Panc1 (cell line): ENCODE measurements at regions of chr2 and their contacts with region 1.

Region 1: GRCh38 chr2:197113275-197113711 is 186.8 kb upstream of the PGAP1 start:
- DNase-seq: peak; percentile 33
- ATAC-seq: peak; percentile 65; the same call in 1 of the 2 replicates
- H3K4me3 ChIP-seq: no peak overlapping the region
- H3K27ac ChIP-seq: no peak overlapping the region
- H3K4me1 ChIP-seq: no peaks in the 10 kb centered on the region
- H3K27me3 ChIP-seq: no peaks in the 10 kb centered on the region
- CTCF ChIP-seq: peak; percentile 73

Region 2: DNA sequence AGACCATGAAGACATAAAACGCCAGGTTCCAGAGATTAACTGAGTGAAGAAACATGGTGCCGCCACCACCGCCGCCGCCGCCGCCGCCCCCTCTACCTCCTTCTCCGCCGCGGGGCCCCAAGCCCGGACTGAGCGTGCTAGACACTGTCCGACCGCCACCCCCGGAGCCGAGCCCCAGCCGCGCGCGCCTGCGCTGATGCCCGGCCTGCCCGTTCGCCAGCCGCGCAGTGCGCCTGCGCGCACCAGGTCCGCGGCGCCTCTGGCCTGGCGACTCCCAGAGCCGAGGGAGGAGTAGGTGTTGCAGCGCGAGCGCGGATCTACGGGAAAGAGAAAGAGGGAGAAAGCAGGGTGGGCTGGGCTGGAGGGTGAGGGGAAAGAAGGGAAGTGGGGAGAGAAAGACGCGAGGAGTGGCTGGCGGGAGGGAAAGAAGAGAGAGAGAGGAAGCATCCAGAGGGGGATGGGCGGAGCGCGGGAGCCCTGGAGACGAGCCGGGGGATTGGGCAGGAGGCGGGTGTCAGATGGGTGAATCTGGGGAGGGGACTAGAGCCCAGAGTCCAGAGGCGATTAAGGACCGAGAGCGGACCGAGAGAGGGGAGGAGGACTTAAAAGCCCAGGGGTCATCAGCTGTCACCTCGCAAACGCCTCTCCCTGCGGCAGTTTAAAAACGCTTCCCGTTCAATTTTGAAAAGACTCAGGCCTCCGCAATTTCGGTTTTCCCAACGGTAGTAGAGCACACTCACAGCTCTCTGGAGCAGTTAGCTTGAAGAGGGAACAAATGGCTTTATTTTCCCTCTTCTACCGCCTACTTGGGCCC is 186.5 kb before region 1 on chr2 and contains the start of gene PGAP1:
- CTCF ChIA-PET with region 1: no interaction called
- POLR2A ChIA-PET with region 1: interaction called, 15 read pairs
- in situ Hi-C with region 1: no loop called
- intact Hi-C with region 1: no loop called
- DNase-seq: peak; percentile 62
- ATAC-seq: peak; percentile 95
- H3K4me3 ChIP-seq: peak within 1 kb of the TSS; percentile 86 to 94
- H3K27ac ChIP-seq: peak within 1 kb of the TSS; percentile 97
- H3K4me1 ChIP-seq: peaks cover 15% of the 10 kb centered on the region
- H3K27me3 ChIP-seq: no peaks in the 10 kb centered on the region
- CTCF ChIP-seq: no peak
- total RNA-seq, gene PGAP1: 15.7 TPM

Region 3: DNA sequence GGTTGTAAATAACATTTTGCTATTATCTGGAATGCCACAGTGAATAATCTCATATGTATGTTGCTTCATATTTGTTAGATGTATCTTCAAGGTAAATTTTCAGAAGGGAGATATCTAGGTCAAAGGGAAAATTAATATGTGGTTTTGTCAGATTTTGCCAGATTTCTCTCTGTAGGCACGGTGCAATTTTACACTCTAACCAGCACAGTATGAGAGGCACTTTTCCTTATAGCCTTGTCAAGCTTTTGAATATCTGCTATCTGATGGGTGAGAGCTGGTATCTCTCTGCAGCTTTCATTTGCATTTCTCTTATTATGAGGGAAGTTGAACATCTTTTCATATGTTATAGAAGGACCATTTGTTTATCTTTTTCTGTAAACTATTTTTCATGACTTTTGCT is 11.1 kb before region 1 on chr2:
- CTCF ChIA-PET with region 1: no interaction called
- POLR2A ChIA-PET with region 1: no interaction called
- in situ Hi-C with region 1: no loop called
- intact Hi-C with region 1: no loop called
- DNase-seq: no peak
- ATAC-seq: no peak
- H3K4me3 ChIP-seq: no peak overlapping the region
- H3K27ac ChIP-seq: no peak overlapping the region
- H3K4me1 ChIP-seq: no peaks in the 10 kb centered on the region
- H3K27me3 ChIP-seq: no peaks in the 10 kb centered on the region
- CTCF ChIP-seq: no peak

Region 4: DNA sequence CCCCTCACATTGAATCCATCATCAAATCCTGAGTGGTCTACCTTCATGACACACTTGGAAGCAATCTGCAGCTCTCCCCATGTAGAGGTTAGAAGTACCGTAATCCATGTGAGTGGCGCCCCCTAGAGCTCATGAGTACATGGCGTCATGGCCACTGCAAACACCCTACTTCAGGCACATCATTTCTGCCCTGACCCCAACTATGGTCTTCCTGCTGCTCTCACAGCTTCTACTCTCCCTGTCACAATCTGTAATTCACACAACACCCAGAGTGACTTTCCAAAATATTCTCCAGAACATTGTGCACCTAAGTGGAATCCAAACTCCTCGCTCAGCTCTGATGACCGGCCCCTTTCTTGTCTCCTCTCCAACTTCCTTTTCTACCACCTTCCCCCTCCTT is 55.4 kb after region 1 on chr2:
- CTCF ChIA-PET with region 1: interaction called, 12 read pairs
- POLR2A ChIA-PET with region 1: no interaction called
- in situ Hi-C with region 1: no loop called
- intact Hi-C with region 1: no loop called
- DNase-seq: no peak
- ATAC-seq: peak; percentile 94
- H3K4me3 ChIP-seq: no peak overlapping the region
- H3K27ac ChIP-seq: no peak overlapping the region
- H3K4me1 ChIP-seq: no peaks in the 10 kb centered on the region
- H3K27me3 ChIP-seq: no peaks in the 10 kb centered on the region
- CTCF ChIP-seq: peak; percentile 80

Region 5: DNA sequence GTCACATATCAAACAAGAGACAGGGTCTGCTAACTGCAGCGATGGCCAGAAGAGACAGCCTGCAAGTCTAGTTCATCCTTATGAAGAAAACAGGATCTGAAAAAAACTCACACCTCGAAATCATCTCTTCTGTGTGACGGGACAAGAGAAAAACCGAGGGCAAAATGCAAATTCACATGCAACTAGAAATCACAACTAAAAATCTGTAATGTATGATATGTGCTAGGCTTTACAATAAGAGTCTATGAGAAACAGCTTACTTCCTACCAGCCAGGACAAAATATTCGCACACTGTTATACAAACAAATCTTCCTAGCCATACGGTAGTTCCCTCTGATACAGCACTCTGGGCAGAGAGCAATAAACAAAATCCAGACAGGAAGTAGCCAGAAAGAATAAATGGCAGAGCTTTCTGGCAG is 148.5 kb after region 1 on chr2:
- CTCF ChIA-PET with region 1: no interaction called
- POLR2A ChIA-PET with region 1: no interaction called
- in situ Hi-C with region 1: no loop called
- intact Hi-C with region 1: no loop called
- DNase-seq: no peak
- ATAC-seq: no peak
- H3K4me3 ChIP-seq: no peak overlapping the region
- H3K27ac ChIP-seq: no peak overlapping the region
- H3K4me1 ChIP-seq: no peaks in the 10 kb centered on the region
- H3K27me3 ChIP-seq: no peaks in the 10 kb centered on the region
- CTCF ChIP-seq: no peak

Region 6: GRCh38 chr2:197309691-197310231 is 196.5 kb after region 1 on chr2:
- CTCF ChIA-PET with region 1: no interaction called
- POLR2A ChIA-PET with region 1: interaction called, 4 read pairs
- in situ Hi-C with region 1: no loop called
- intact Hi-C with region 1: loop called (anchors 5 kb)
- DNase-seq: no peak
- ATAC-seq: peak; percentile 36; the same call in 1 of the 2 replicates
- H3K4me3 ChIP-seq: peak overlapping the region; percentile 66 to 79
- H3K27ac ChIP-seq: peak overlapping the region; percentile 69
- H3K4me1 ChIP-seq: peaks cover 17% of the 10 kb centered on the region
- H3K27me3 ChIP-seq: no peaks in the 10 kb centered on the region
- CTCF ChIP-seq: no peak